B cell (primary cell): ENCODE measurements at regions of chr2 and their contacts with region 1.

Region 1: DNA sequence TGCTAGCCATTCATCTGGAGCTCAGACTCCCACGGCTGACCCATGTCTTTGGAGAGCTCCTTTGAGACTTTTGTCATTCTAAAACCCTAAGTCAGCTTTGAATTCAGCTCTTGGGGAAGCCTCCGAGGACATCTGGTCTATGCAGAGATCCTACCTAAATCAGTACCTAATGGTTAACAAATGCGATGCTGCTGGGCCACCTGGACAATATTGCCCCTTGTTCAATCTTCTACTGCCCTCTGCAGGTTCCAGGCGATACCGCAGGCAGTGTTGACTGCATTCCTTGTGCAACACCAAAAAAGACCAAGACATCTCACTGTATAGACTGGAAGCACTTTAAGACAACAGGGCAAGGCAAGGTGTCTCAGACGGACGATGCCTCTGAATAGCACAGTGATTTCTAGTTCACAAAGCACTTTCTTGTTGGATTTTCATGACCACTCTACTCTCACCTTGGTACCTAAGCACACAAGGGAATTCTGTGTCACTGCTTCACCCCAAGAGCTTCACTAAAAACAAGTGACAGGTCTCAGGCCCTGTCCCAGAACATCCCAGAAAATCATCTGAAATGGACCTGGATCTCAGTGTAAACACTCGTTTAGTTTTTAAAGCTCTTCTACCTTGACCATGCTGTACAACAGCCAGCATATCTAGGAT is 80.9 kb downstream of the XDH start:
- DNase-seq: peak; percentile 84
- ATAC-seq: peak; percentile 90
- H3K4me3 ChIP-seq: no peak overlapping the region
- H3K4me3 Mint-ChIP-seq: no peak overlapping the region
- H3K27ac ChIP-seq: no peak overlapping the region
- H3K27ac Mint-ChIP-seq: no peak overlapping the region
- H3K4me1 ChIP-seq: peaks cover 0 to 9% of the 10 kb centered on the region in 2 donors
- H3K4me1 Mint-ChIP-seq: peaks cover 13% of the 10 kb centered on the region
- H3K27me3 ChIP-seq: peaks cover 0 to 6% (median 2%) of the 10 kb centered on the region in 4 experiments
- H3K27me3 Mint-ChIP-seq: peaks cover 5% of the 10 kb centered on the region
- CTCF ChIP-seq: peak; percentile 98

Region 2: DNA sequence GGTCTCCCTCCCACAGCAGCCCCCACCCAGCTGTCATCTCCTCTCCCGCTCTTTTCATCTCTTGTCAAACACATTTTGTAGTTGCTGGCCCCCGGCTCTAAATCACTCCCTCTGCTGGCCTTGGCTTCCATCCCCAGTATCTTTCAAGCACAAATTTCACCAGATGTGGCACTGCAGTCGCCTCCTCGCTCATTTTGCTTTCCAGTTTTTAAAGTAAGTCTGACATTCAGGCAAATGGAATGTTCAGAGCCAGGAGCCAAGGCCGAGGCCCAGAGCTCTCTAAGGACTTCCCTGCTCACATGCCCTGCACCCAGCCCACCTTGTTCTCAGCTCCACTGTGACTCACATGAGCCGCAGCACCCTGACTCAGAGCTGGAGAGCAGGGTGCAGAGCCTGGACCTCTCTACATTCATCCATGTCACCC is 353.8 kb before region 1 on chr2:
- CTCF ChIA-PET with region 1: interaction called, 4 read pairs
- POLR2A ChIA-PET with region 1: no interaction called
- intact Hi-C with region 1: loop called (anchors 10 kb)
- DNase-seq: no peak
- ATAC-seq: no peak
- H3K4me3 ChIP-seq: no peak overlapping the region
- H3K4me3 Mint-ChIP-seq: no peak overlapping the region
- H3K27ac ChIP-seq: no peak overlapping the region
- H3K27ac Mint-ChIP-seq: no peak overlapping the region
- H3K4me1 ChIP-seq: no peaks in the 10 kb centered on the region
- H3K4me1 Mint-ChIP-seq: no peaks in the 10 kb centered on the region
- H3K27me3 ChIP-seq: no peaks in the 10 kb centered on the region
- H3K27me3 Mint-ChIP-seq: no peaks in the 10 kb centered on the region
- CTCF ChIP-seq: no peak

Region 3: DNA sequence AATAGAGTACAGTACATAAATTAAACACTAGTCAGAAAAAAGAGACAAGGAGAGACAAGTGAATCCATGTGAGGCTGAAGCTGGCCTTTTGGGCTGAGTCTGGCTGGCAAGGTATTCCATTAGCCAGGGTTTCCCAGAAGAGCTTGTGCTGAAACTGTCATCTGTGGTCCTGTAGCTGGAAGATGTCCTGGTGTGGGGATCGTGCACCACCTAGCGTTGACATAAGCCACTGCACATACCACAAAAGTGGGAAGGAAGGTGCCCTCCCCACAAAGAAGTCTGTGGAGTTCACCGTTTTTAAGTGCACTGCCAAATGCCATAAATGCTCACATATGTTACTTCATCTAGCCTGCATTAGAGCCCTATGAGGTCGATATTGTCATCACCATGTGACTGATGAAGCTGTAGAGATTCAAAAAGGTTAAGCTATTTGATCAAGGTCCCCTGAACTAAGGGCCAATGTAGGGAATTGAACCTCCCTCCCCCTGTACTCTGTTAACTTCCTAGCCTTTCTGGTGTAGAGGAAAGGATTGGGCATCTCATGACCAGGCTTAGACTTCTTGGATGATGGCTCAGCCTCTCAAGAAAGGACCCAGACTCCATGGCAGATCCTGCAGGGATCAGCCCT is 163.5 kb before region 1 on chr2:
- CTCF ChIA-PET with region 1: interaction called, 115 read pairs
- POLR2A ChIA-PET with region 1: no interaction called
- intact Hi-C with region 1: loop called (anchors 1 kb)
- DNase-seq: peak; percentile 74
- ATAC-seq: peak; percentile 94
- H3K4me3 ChIP-seq: no peak overlapping the region
- H3K4me3 Mint-ChIP-seq: no peak overlapping the region
- H3K27ac ChIP-seq: no peak overlapping the region
- H3K27ac Mint-ChIP-seq: peak overlapping the region; percentile 43
- H3K4me1 ChIP-seq: peaks cover 9 to 20% of the 10 kb centered on the region in 2 donors
- H3K4me1 Mint-ChIP-seq: peaks cover 27% of the 10 kb centered on the region
- H3K27me3 ChIP-seq: no peaks in the 10 kb centered on the region
- H3K27me3 Mint-ChIP-seq: peaks cover under 1% of the 10 kb centered on the region
- CTCF ChIP-seq: peak; percentile 95

Region 4: DNA sequence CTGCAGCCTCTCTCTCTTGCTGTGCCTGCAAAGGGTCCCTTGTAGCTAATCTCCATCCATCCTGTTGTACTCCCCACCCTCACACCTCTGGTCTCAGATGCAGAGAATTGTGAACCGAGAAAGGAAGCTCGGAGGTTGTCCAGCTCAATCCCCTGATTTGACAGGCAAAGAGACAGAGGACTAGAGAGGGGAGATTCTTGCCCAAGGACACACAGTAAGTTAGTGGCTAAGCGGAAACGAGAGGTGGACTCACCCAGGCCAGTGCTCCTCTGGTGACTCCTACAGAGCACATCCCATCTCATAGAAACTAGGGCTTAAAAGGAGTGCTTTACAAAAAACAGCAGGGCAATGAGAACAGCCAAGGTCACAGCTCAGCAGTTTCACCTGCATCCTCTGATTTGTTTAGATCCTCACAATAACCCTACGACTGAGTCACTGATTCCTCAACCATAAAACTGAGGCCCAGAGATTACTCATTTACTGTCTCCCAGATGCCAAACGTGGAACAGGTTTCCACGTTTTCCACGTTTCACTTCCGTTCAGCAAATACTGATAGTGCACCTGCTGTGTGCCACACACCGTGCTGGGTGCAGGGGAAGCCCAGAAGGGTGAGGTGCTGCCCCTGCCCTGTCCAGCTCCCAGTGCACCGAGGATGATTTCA is 77.6 kb before region 1 on chr2:
- CTCF ChIA-PET with region 1: interaction called, 21 read pairs
- POLR2A ChIA-PET with region 1: no interaction called
- intact Hi-C with region 1: no loop called
- DNase-seq: peak; percentile 54
- ATAC-seq: peak; percentile 65
- H3K4me3 ChIP-seq: peak overlapping the region in 3 of 5 experiments; percentile 12 to 26 (median 22)
- H3K4me3 Mint-ChIP-seq: peak overlapping the region; percentile 83
- H3K27ac ChIP-seq: peak overlapping the region; percentile 51 to 60
- H3K27ac Mint-ChIP-seq: peak overlapping the region; percentile 96
- H3K4me1 ChIP-seq: peaks cover 78 to 86% of the 10 kb centered on the region in 2 donors
- H3K4me1 Mint-ChIP-seq: peaks cover 83% of the 10 kb centered on the region
- H3K27me3 ChIP-seq: no peaks in the 10 kb centered on the region
- H3K27me3 Mint-ChIP-seq: no peaks in the 10 kb centered on the region
- CTCF ChIP-seq: no peak

Region 5: GRCh38 chr2:31318361-31319336 is 15.0 kb before region 1 on chr2:
- CTCF ChIA-PET with region 1: interaction called, 59 read pairs
- POLR2A ChIA-PET with region 1: no interaction called
- intact Hi-C with region 1: no loop called
- DNase-seq: peak; percentile 47
- ATAC-seq: peak; percentile 92
- H3K4me3 ChIP-seq: peak overlapping the region in 1 of 5 experiments; percentile 31
- H3K4me3 Mint-ChIP-seq: peak overlapping the region; percentile 67
- H3K27ac ChIP-seq: peak overlapping the region; percentile 11 to 65
- H3K27ac Mint-ChIP-seq: peak overlapping the region; percentile 89
- H3K4me1 ChIP-seq: peaks cover 31% of the 10 kb centered on the region in 2 donors
- H3K4me1 Mint-ChIP-seq: peaks cover 51% of the 10 kb centered on the region
- H3K27me3 ChIP-seq: no peaks in the 10 kb centered on the region
- H3K27me3 Mint-ChIP-seq: no peaks in the 10 kb centered on the region
- CTCF ChIP-seq: no peak

Region 6: DNA sequence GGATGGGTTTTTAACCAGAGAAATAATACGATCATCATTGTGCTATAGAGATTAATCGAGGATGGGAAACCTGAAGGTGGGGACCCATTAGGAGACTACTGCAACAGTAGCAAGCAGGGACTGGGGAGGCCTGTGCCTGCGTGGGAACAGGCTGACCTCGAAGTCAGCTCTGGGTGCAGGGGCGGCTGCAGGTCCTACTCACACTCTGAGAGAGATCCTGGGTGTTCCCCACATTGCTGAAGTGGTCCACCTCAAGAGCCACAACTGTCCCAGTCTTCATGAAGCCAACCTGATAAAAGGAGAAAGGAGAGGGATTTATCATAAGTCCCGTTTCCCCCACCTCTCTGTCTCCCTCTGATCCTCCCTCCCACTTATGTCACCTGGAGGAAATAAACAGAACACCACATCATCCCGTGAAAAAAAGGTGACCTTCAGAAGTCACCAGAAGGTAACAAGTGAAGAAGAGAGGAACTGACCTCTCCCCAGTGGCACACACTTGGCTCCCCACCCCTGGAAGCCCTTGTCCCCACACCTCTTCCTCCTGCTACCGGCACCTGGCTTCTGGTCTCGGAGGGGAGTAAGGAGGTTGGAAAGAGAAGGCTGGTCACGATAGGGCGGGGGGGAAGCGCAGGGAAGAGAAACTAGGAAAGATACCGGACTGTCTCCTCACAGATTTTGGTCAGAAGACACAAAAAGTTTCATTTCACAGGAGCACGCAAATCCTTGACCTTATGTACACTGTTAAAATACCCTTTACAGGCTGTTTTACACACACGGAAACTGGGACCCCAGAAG is 30.5 kb after region 1 on chr2:
- CTCF ChIA-PET with region 1: no interaction called
- POLR2A ChIA-PET with region 1: no interaction called
- intact Hi-C with region 1: no loop called
- DNase-seq: no peak
- ATAC-seq: no peak
- H3K4me3 ChIP-seq: no peak overlapping the region
- H3K4me3 Mint-ChIP-seq: no peak overlapping the region
- H3K27ac ChIP-seq: no peak overlapping the region
- H3K27ac Mint-ChIP-seq: no peak overlapping the region
- H3K4me1 ChIP-seq: no peaks in the 10 kb centered on the region
- H3K4me1 Mint-ChIP-seq: no peaks in the 10 kb centered on the region
- H3K27me3 ChIP-seq: no peaks in the 10 kb centered on the region
- H3K27me3 Mint-ChIP-seq: peaks cover 15% of the 10 kb centered on the region
- CTCF ChIP-seq: no peak

Region 7: DNA sequence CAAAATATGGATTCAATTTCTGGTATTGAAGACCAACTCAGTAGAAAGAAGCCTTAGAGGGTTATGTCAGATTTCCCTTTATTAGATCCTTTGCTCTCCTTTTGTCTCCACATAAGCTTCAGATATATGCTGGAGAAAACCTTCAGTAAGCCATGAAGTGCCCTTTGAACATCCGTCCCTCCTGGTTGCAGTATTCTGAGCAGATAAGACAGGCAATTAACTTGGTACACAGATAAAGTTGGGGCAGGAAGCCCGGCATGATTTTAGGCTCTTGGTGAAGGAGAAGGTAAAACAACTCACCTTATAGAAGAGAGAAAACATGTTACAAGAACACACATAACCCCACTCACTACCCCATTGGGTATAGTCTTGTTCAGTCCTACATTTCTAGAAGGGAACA is 170.7 kb after region 1 on chr2:
- CTCF ChIA-PET with region 1: no interaction called
- POLR2A ChIA-PET with region 1: no interaction called
- intact Hi-C with region 1: no loop called
- DNase-seq: no peak
- ATAC-seq: no peak
- H3K4me3 ChIP-seq: no peak overlapping the region
- H3K4me3 Mint-ChIP-seq: no peak overlapping the region
- H3K27ac ChIP-seq: no peak overlapping the region
- H3K27ac Mint-ChIP-seq: no peak overlapping the region
- H3K4me1 ChIP-seq: no peaks in the 10 kb centered on the region
- H3K4me1 Mint-ChIP-seq: no peaks in the 10 kb centered on the region
- H3K27me3 ChIP-seq: peaks cover 0 to 5% (median 2%) of the 10 kb centered on the region in 4 experiments
- H3K27me3 Mint-ChIP-seq: peaks cover 16% of the 10 kb centered on the region
- CTCF ChIP-seq: no peak

Region 8: GRCh38 chr2:31547485-31547884 is 213.8 kb after region 1 on chr2:
- CTCF ChIA-PET with region 1: no interaction called
- POLR2A ChIA-PET with region 1: no interaction called
- intact Hi-C with region 1: no loop called
- DNase-seq: no peak
- ATAC-seq: no peak
- H3K4me3 ChIP-seq: no peak overlapping the region
- H3K4me3 Mint-ChIP-seq: no peak overlapping the region
- H3K27ac ChIP-seq: no peak overlapping the region
- H3K27ac Mint-ChIP-seq: no peak overlapping the region
- H3K4me1 ChIP-seq: no peaks in the 10 kb centered on the region
- H3K4me1 Mint-ChIP-seq: no peaks in the 10 kb centered on the region
- H3K27me3 ChIP-seq: no peaks in the 10 kb centered on the region
- H3K27me3 Mint-ChIP-seq: peaks cover 2% of the 10 kb centered on the region
- CTCF ChIP-seq: no peak

Region 9: GRCh38 chr2:31660165-31660564 is 326.5 kb after region 1 on chr2:
- CTCF ChIA-PET with region 1: no interaction called
- POLR2A ChIA-PET with region 1: no interaction called
- intact Hi-C with region 1: no loop called
- DNase-seq: no peak
- ATAC-seq: no peak
- H3K4me3 ChIP-seq: no peak overlapping the region
- H3K4me3 Mint-ChIP-seq: no peak overlapping the region
- H3K27ac ChIP-seq: no peak overlapping the region
- H3K27ac Mint-ChIP-seq: no peak overlapping the region
- H3K4me1 ChIP-seq: no peaks in the 10 kb centered on the region
- H3K4me1 Mint-ChIP-seq: no peaks in the 10 kb centered on the region
- H3K27me3 ChIP-seq: peaks cover 0 to 3% (median 1%) of the 10 kb centered on the region in 4 experiments
- H3K27me3 Mint-ChIP-seq: peaks cover 8% of the 10 kb centered on the region
- CTCF ChIP-seq: no peak